AG04450 (cell line): ENCODE measurements at regions of chr14 and their contacts with region 1.

Region 1: GRCh38 chr14:64612021-64612380 is 62.2 kb downstream of the PPP1R36 start:
- DNase-seq: peak; percentile 61
- H3K4me3 ChIP-seq: no peak overlapping the region
- H3K27ac ChIP-seq: peak overlapping the region; percentile 88
- H3K27me3 ChIP-seq: no peaks in the 10 kb centered on the region
- CTCF ChIP-seq: no peak

Region 2: DNA sequence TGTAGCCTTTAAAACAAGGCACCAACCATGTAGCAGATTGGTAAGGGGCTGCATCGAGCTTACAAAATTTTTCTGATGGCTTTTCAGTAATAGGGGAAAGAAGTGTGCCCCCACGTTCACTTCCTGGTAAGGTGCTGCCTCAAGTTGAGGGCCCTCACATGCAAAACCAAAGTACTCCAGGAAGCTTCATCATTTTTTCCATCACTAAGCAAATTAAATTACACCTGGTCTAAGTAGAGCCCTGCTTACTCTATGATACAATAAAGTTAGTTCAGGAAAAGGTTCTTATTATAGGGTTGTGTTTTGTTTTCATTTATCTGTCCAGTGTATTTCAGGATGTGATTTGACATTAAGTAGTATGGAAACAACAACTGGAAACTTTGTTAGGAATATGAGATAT is 161.7 kb before region 1 on chr14:
- CTCF ChIA-PET with region 1: no interaction called
- POLR2A ChIA-PET with region 1: no interaction called
- DNase-seq: no peak
- H3K4me3 ChIP-seq: no peak overlapping the region
- H3K27ac ChIP-seq: no peak overlapping the region
- H3K27me3 ChIP-seq: no peaks in the 10 kb centered on the region
- CTCF ChIP-seq: no peak

Region 3: GRCh38 chr14:64758691-64759584 is 146.9 kb after region 1 on chr14:
- CTCF ChIA-PET with region 1: no interaction called
- POLR2A ChIA-PET with region 1: interaction called, 10 read pairs
- DNase-seq: peak; percentile 93
- H3K4me3 ChIP-seq: no peak overlapping the region
- H3K27ac ChIP-seq: peak overlapping the region; percentile 91
- H3K27me3 ChIP-seq: peaks cover 4% of the 10 kb centered on the region
- CTCF ChIP-seq: no peak

Region 4: DNA sequence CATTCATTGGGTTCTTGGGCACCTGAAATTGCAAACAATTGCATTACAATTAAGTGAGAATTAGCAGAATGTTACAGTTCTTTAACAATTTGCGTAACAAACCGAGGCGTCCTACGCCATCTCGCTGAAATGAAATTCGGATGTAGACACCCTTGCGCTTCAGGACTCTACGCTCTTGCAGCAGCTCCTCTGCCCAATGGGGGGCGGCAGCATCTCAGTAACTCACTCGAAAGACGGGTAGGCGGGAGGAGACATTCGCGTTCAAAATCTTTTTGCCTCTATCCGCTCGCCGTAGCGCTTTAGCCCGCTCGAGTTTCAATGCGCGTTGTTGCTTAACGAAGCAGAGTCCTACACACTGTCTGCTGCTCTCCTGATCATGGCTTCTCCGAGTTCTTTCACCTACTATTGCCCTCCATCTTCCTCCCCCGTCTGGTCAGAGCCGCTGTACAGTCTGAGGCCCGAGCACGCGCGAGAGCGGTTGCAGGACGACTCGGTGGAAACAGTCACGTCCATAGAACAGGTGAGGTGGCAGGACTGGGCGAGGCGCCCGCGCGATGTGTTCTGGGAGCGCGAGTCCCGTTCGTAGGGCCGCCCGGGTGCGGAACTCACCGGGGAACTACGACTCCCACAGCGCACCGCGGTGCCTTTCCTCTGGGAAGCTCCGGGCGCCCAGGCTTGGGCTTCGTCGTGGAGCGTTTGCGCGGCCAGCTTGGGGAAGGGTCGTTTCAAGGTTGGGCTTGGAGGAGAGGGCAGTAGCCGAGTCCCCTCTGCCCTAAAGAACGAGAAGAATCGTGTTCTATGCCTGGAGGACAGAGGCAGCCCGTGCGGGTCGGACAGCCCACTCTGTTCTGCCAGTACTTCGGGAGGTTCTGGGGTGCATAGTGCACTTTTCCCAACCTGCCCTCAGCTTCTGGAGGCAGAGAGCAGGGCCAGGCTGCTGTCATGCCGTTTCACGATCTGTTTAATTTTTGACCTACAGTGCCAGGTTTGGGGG is 374.9 kb after region 1 on chr14 and contains the start of gene FNTB:
- CTCF ChIA-PET with region 1: no interaction called
- POLR2A ChIA-PET with region 1: no interaction called
- DNase-seq: peak; percentile 92
- H3K4me3 ChIP-seq: peak within 1 kb of the TSS; percentile 99
- H3K27ac ChIP-seq: peak within 1 kb of the TSS; percentile 80
- H3K27me3 ChIP-seq: peaks cover 9% of the 10 kb centered on the region
- CTCF ChIP-seq: peak; percentile 83
- polyA plus RNA-seq, gene FNTB: 17.3 and 20.2 TPM in 2 replicates